ENCODE measurements at regions of chr15 and their contacts with region 1.

Region 1: DNA sequence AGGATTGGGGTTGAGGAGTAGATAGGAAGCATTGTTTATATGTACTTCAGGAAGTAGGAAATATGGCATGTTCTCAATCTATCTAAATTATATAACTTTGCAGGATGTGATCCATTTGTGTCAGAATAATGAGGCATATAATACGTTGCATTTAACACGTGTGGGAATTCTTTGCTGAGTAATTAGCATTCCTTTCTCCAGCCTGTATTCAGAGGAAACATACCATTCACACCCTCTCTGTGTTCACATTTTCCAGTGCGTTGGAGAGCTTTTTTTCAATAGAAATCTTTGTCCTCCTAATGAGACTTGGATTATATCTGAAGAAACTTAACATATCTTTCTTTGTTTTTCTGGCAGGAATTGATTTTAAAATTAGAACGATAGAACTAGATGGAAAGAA is 33.0 kb upstream of the APH1B start:
- DNase-seq: peak; percentile 44
- H3K4me3 ChIP-seq: peak overlapping the region in 2 of 3 experiments; percentile 8 to 16
- H3K27ac ChIP-seq: peak overlapping the region; percentile 77
- H3K4me1 ChIP-seq: peaks cover 38% of the 10 kb centered on the region
- H3K27me3 ChIP-seq: no peaks in the 10 kb centered on the region
- CTCF ChIP-seq: no peak

Region 2: GRCh38 chr15:63218100-63218808 is 26.1 kb before region 1 on chr15:
- CTCF ChIA-PET with region 1: no interaction called
- dilution Hi-C with region 1: no loop called
- in situ Hi-C with region 1: no loop called
- intact Hi-C with region 1: loop called (anchors 2 kb)
- DNase-seq: peak; percentile 94
- H3K4me3 ChIP-seq: no peak overlapping the region
- H3K27ac ChIP-seq: peak overlapping the region; percentile 64
- H3K4me1 ChIP-seq: peaks cover 28% of the 10 kb centered on the region
- H3K27me3 ChIP-seq: no peaks in the 10 kb centered on the region
- CTCF ChIP-seq: no peak